ENCODE measurements at regions of chr7 and their contacts with region 1.

Region 1: GRCh38 chr7:135509903-135510602 is at the start of gene CNOT4:
- DNase-seq: peak; percentile 93
- ATAC-seq: peak; percentile 91
- H3K4me3 ChIP-seq: peak within 1 kb of the TSS; percentile 84
- H3K27ac ChIP-seq: peak within 1 kb of the TSS; percentile 53; the same call in 1 of the 2 replicates
- H3K4me1 ChIP-seq: peaks cover 22% of the 10 kb centered on the region
- H3K27me3 ChIP-seq: no peaks in the 10 kb centered on the region
- CTCF ChIP-seq: no peak
- total RNA-seq, gene CNOT4: 8.4 and 9.7 TPM in 2 replicates

Region 2: GRCh38 chr7:135414850-135415439 is 95.1 kb before region 1 on chr7:
- CTCF ChIA-PET with region 1: interaction called, 5 read pairs
- POLR2A ChIA-PET with region 1: no interaction called
- intact Hi-C with region 1: loop called (anchors 2 kb)
- DNase-seq: peak; percentile 70
- ATAC-seq: peak; percentile 71
- H3K4me3 ChIP-seq: no peak overlapping the region
- H3K27ac ChIP-seq: no peak overlapping the region
- H3K4me1 ChIP-seq: no peaks in the 10 kb centered on the region
- H3K27me3 ChIP-seq: no peaks in the 10 kb centered on the region
- CTCF ChIP-seq: peak; percentile 74